H1 (cell line): ENCODE measurements at regions of chr3 and their contacts with region 1.

Region 1: DNA sequence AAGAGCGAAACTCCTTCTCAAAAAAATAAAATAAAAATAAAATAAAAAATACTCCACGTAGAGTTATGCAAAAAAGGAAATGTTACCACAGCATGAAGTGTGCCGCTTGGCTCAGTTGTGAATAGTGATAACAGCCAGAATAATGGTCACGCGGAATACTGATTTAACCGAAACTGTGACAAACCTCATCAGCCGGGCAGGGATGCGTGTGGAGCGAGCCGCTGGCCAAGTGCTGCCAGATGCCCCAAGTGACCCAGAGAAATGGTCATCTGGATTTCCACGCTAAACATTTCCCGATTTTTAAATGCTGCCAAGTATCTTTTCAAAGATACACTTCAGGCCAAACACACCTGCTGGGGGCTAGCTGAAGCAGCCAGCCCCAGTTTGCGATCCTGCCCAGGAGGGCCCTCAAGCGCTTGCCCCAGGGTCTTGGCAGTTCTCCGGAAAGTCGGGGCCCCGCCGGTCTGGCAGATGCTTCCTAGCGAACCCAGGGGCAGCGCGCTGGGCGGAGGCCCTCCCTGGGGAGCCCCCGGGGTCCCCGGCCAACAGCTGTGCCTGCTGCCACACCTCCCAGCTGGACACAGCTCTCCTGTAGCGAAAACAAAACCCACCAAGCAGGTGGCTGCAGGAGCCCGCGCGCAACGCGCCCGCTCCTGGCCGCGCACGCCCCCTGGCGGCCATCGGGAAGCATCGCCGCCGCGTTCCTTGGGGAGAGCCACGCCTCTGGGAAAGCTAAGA is 35.1 kb downstream of the CMTM6 start:
- DNase-seq: peak in 1 of 2 experiments; percentile 95
- H3K4me3 ChIP-seq: peak overlapping the region in 2 of 4 experiments; percentile 19 to 46; a peak in 3 of 8 replicates
- H3K27ac ChIP-seq: no peak overlapping the region
- H3K4me1 ChIP-seq: peaks cover 0 to 7% (median 1%) of the 10 kb centered on the region in 4 experiments; a peak in 2 of 7 replicates
- H3K27me3 ChIP-seq: no peaks in the 10 kb centered on the region
- CTCF ChIP-seq: peak; percentile 93 to 98 (median 96)
- EP300 ChIP-seq: peak in 1 of 2 experiments; percentile 60; a peak in 1 of 3 replicates
- POLR2A ChIP-seq: no peak
- RAD21 ChIP-seq: peak; percentile 91 to 97

Region 2: GRCh38 chr3:32120471-32120870 is 347.0 kb before region 1 on chr3:
- CTCF ChIA-PET with region 1: no interaction called
- POLR2A ChIA-PET with region 1: no interaction called
- DNase-seq: no peak
- H3K4me3 ChIP-seq: no peak overlapping the region
- H3K27ac ChIP-seq: no peak overlapping the region
- H3K4me1 ChIP-seq: 0 out of 7 replicates have a peak, but pooled peaks cover 0 to 2% (median 0%) of the 10 kb centered on the region in 4 experiments
- H3K27me3 ChIP-seq: no peaks in the 10 kb centered on the region
- CTCF ChIP-seq: no peak
- EP300 ChIP-seq: no peak
- POLR2A ChIP-seq: no peak
- RAD21 ChIP-seq: no peak

Region 3: GRCh38 chr3:32285891-32286290 is 181.6 kb before region 1 on chr3:
- CTCF ChIA-PET with region 1: no interaction called
- POLR2A ChIA-PET with region 1: no interaction called
- DNase-seq: no peak
- H3K4me3 ChIP-seq: no peak overlapping the region
- H3K27ac ChIP-seq: no peak overlapping the region
- H3K4me1 ChIP-seq: 0 out of 7 replicates have a peak, but pooled peaks cover 0 to 2% (median 0%) of the 10 kb centered on the region in 4 experiments
- H3K27me3 ChIP-seq: no peaks in the 10 kb centered on the region
- CTCF ChIP-seq: no peak
- EP300 ChIP-seq: no peak
- POLR2A ChIP-seq: no peak
- RAD21 ChIP-seq: no peak

Region 4: GRCh38 chr3:32374788-32375595 is 92.5 kb before region 1 on chr3:
- CTCF ChIA-PET with region 1: interaction called, 83 read pairs
- POLR2A ChIA-PET with region 1: interaction called, 4 read pairs
- DNase-seq: peak in 1 of 2 experiments; percentile 82
- H3K4me3 ChIP-seq: no peak overlapping the region
- H3K27ac ChIP-seq: no peak overlapping the region
- H3K4me1 ChIP-seq: no peaks in the 10 kb centered on the region
- H3K27me3 ChIP-seq: no peaks in the 10 kb centered on the region
- CTCF ChIP-seq: peak in 2 of 3 experiments; percentile 64 to 72; a peak in 3 of 4 replicates
- EP300 ChIP-seq: no peak
- POLR2A ChIP-seq: no peak
- RAD21 ChIP-seq: peak; percentile 57 to 71

Region 5: GRCh38 chr3:32401556-32402081 is 65.9 kb before region 1 on chr3:
- CTCF ChIA-PET with region 1: interaction called, 43 read pairs
- POLR2A ChIA-PET with region 1: interaction called, 3 read pairs
- DNase-seq: peak in 1 of 2 experiments; percentile 80
- H3K4me3 ChIP-seq: peak overlapping the region; percentile 19 to 51 (median 34)
- H3K27ac ChIP-seq: peak overlapping the region; percentile 49; the same call in 1 of the 2 replicates
- H3K4me1 ChIP-seq: peaks cover 2 to 5% (median 4%) of the 10 kb centered on the region in 4 experiments; a peak in 6 of 7 replicates
- H3K27me3 ChIP-seq: no peaks in the 10 kb centered on the region
- CTCF ChIP-seq: no peak
- EP300 ChIP-seq: no peak
- POLR2A ChIP-seq: peak in 1 of 2 experiments; percentile 81; a peak in 2 of 3 replicates
- RAD21 ChIP-seq: no peak; a peak in 1 of 4 replicates

Region 6: GRCh38 chr3:32420126-32421038 is 47.1 kb before region 1 on chr3:
- CTCF ChIA-PET with region 1: interaction called, 47 read pairs
- POLR2A ChIA-PET with region 1: interaction called, 3 read pairs
- DNase-seq: peak; percentile 51 to 60
- H3K4me3 ChIP-seq: no peak overlapping the region; a peak in 1 of 8 replicates
- H3K27ac ChIP-seq: peak overlapping the region; percentile 76
- H3K4me1 ChIP-seq: peaks cover 8 to 11% (median 10%) of the 10 kb centered on the region in 4 experiments
- H3K27me3 ChIP-seq: no peaks in the 10 kb centered on the region
- CTCF ChIP-seq: peak; percentile 13 to 38 (median 28)
- EP300 ChIP-seq: no peak
- POLR2A ChIP-seq: no peak
- RAD21 ChIP-seq: peak; percentile 14 to 33; a peak in 3 of 4 replicates

Region 7: DNA sequence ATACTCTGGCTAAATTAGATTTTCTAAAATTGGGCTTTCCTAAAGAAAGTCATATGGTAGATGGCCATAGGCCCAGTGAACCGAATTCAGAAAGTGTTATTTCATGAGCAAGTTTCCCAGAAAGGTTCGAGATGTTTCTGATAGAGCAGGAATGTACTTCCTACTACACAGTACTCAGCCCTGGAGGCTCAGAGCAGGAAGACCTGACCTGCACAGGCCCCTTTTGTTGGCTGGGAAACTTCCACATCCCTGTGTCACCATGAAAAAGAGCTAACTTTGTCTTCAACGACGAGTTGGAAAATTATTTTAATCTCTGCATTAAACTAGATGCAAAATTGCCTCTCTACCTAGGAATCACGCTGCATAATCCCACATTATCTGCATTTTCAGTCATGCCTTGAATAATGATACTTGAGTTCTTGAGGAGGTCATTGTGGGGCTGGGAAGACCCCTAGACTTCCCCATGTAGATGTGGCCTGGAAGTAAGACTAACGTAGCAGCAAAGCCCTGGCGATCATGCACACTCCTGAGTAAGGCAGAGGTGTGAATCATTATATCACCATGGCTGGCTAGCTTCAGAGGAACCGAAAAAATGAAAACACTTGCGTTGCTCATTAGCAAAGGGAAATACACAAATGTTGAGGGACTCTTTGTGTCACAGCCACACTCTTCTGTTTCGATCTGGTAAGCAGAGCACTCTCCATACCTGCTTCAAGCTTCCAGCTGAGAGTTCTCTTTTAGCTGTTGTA is 28.7 kb before region 1 on chr3:
- CTCF ChIA-PET with region 1: interaction called, 44 read pairs
- POLR2A ChIA-PET with region 1: no interaction called
- DNase-seq: peak in 1 of 2 experiments; percentile 36
- H3K4me3 ChIP-seq: no peak overlapping the region
- H3K27ac ChIP-seq: no peak overlapping the region
- H3K4me1 ChIP-seq: peaks cover 0 to 5% (median 1%) of the 10 kb centered on the region in 4 experiments; a peak in 2 of 7 replicates
- H3K27me3 ChIP-seq: no peaks in the 10 kb centered on the region
- CTCF ChIP-seq: no peak
- EP300 ChIP-seq: no peak
- POLR2A ChIP-seq: no peak
- RAD21 ChIP-seq: no peak

Region 8: GRCh38 chr3:32522682-32523081 is 55.2 kb after region 1 on chr3:
- CTCF ChIA-PET with region 1: no interaction called
- POLR2A ChIA-PET with region 1: no interaction called
- DNase-seq: no peak
- H3K4me3 ChIP-seq: no peak overlapping the region
- H3K27ac ChIP-seq: no peak overlapping the region
- H3K4me1 ChIP-seq: no peaks in the 10 kb centered on the region
- H3K27me3 ChIP-seq: no peaks in the 10 kb centered on the region
- CTCF ChIP-seq: no peak
- EP300 ChIP-seq: no peak
- POLR2A ChIP-seq: no peak
- RAD21 ChIP-seq: no peak